Psoas muscle (tissue), 8 donors: ENCODE measurements at regions of chr16 and their contacts with region 1.

Region 1: GRCh38 chr16:2500918-2501750 is 12.6 kb upstream of the ATP6V0C start:
- DNase-seq: peak; percentile 82 to 90
- ATAC-seq: peak; percentile 84 to 90 (median 86)
- H3K4me3 ChIP-seq: peak overlapping the region; percentile 34
- H3K27ac ChIP-seq: no peak overlapping the region
- H3K4me1 ChIP-seq: peaks cover 36% of the 10 kb centered on the region
- H3K27me3 ChIP-seq: no peaks in the 10 kb centered on the region
- CTCF ChIP-seq: peak; percentile 98

Region 2: GRCh38 chr16:2194852-2195321 is 306.2 kb before region 1 on chr16:
- intact Hi-C with region 1: loop called in 1 of 2 experiments (anchors 5 kb)
- DNase-seq: no peak
- ATAC-seq: peak; percentile 64 to 91 (median 86)
- H3K4me3 ChIP-seq: peak overlapping the region; percentile 55
- H3K27ac ChIP-seq: no peak overlapping the region
- H3K4me1 ChIP-seq: peaks cover 8% of the 10 kb centered on the region
- H3K27me3 ChIP-seq: peaks cover 0 to 42% (median 20%) of the 10 kb centered on the region in 3 donors
- CTCF ChIP-seq: peak; percentile 55

Region 3: DNA sequence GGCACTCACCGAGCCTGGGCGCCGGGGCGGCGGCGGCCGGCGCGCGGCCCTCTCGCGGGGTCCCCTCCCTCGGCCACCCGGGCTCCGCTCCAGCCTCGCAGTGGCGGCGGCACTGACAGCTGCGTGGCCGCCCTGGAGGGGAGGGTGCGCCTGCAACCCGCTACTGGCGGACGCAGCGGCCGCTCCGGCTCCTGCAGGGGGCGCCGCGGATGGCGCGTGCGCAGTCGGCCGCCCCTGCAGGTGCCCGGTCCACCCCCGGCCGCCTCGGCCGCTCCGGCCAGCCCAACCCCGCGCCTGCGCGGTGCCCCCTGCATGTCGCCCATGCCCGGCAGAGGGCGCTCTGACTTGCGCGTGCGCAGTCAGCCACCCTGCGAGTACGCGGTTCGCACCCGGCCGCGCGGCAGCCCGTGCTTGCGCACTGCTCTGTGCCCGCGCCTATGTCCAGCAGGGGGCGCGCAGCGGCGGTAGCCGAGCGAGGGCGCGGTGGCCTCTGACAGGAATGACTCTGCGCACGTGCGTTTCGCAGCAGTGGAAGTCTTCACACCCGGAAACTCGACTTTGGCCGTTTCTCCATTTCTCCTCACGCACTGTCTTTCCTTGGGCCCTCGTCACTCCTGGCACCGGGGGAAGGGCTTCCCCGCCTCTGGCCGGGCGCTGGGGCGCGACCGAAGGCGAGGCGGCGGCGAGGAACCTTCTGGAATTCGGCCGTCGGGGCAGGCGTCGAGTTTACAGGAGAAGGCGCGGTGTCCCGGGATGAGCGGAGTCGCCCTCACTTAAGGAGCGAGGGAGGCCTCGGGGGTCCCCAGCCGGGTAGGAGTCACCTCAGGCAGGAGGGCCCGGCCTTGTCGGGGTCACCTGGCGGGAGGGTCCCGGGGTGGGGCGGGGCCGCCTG is 160.3 kb before region 1 on chr16 and contains the start of gene ABCA3:
- intact Hi-C with region 1: loop called (anchors 1 to 5 kb)
- DNase-seq: peak; percentile 94 to 96
- ATAC-seq: peak; percentile 94 to 97 (median 96)
- H3K4me3 ChIP-seq: peak within 1 kb of the TSS; percentile 83
- H3K27ac ChIP-seq: peak within 1 kb of the TSS; percentile 50
- H3K4me1 ChIP-seq: peaks cover 10% of the 10 kb centered on the region
- H3K27me3 ChIP-seq: no peaks in the 10 kb centered on the region
- CTCF ChIP-seq: peak; percentile 100
- total RNA-seq, gene ABCA3: 8.6 to 9.4 (median 9.0) TPM

Region 4: GRCh38 chr16:2429034-2429770 is 71.9 kb before region 1 on chr16 and contains the start of gene CCNF:
- intact Hi-C with region 1: loop called in 1 of 2 experiments (anchors 5 kb)
- DNase-seq: peak; percentile 98 to 99
- ATAC-seq: peak; percentile 98 to 100 (median 99)
- H3K4me3 ChIP-seq: peak within 1 kb of the TSS; percentile 85
- H3K27ac ChIP-seq: peak within 1 kb of the TSS; percentile 80
- H3K4me1 ChIP-seq: peaks cover 8% of the 10 kb centered on the region
- H3K27me3 ChIP-seq: no peaks in the 10 kb centered on the region
- CTCF ChIP-seq: no peak
- total RNA-seq, gene CCNF: 1.2 to 1.8 (median 1.7) TPM